ENCODE measurements at regions of chr11 and their contacts with region 1.

Region 1: GRCh38 chr11:76270387-76270786 is 64.1 kb upstream of the WNT11 start:
- DNase-seq: no peak
- ATAC-seq: no peak
- H3K4me3 ChIP-seq: no peak overlapping the region
- H3K27ac ChIP-seq: no peak overlapping the region
- H3K4me1 ChIP-seq: no peaks in the 10 kb centered on the region
- H3K27me3 ChIP-seq: no peaks in the 10 kb centered on the region
- CTCF ChIP-seq: no peak

Region 2: DNA sequence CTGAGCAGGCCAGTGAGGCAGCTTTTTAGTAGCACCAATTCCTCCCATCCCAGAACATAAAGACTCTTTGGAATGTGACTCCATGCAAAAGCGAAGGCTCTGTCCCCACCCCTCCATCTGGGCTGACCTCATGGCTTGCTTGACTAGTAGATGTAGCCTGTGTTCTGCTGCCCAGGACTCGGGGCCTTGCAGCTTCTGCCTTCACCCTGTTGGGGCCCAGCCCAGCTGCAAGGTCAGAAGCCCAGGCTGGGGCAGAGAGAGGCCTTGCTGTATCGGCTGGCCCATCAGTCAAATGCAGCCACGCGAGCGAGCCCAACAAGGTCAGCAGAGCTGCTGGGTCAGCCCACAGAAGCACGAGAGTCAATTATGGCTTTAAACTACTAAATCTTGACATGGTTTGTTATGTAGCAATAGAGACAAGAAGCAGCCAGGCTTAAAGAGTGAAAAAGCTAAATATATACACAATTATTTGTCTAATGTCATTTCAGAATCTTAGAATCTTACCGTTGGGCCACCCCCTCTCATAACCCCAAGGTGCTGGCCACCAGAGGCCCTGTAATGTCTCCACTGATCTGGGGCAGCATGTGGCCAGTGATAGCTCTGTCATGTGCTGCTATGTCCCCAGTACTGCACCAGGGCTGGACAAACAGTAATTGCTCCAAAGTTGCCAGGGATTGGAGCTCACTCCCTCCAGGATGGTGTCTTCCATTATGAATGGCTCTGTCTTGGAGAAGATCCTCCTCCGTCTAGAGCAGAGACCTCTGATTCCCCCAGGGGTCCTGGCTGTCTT is 53.7 kb before region 1 on chr11:
- CTCF ChIA-PET with region 1: no interaction called
- POLR2A ChIA-PET with region 1: interaction called, 13 read pairs
- in situ Hi-C with region 1: no loop called
- intact Hi-C with region 1: no loop called
- DNase-seq: no peak
- ATAC-seq: no peak
- H3K4me3 ChIP-seq: no peak overlapping the region
- H3K27ac ChIP-seq: no peak overlapping the region
- H3K4me1 ChIP-seq: no peaks in the 10 kb centered on the region
- H3K27me3 ChIP-seq: peaks cover 5% of the 10 kb centered on the region; the same call in 1 of the 2 replicates
- CTCF ChIP-seq: no peak